Activated B cell treated with CpG ODN at 0.5 μM for 24 hours (primary cell): ENCODE measurements at regions of chr10 and their contacts with region 1.

Region 1: GRCh38 chr10:78302989-78303854 is 269.6 kb downstream of the RPS24 start:
- DNase-seq: peak; percentile 96
- ATAC-seq: peak; percentile 87
- H3K4me3 Mint-ChIP-seq: peak overlapping the region; percentile 92
- H3K27ac Mint-ChIP-seq: peak overlapping the region; percentile 93
- H3K4me1 Mint-ChIP-seq: peaks cover 47% of the 10 kb centered on the region
- H3K27me3 Mint-ChIP-seq: no peaks in the 10 kb centered on the region
- CTCF ChIP-seq: peak; percentile 44

Region 2: GRCh38 chr10:78047314-78047891 is 255.8 kb before region 1 on chr10:
- CTCF ChIA-PET with region 1: interaction called, 3 read pairs
- POLR2A ChIA-PET with region 1: interaction called, 3 read pairs
- intact Hi-C with region 1: loop called (anchors 5 kb)
- DNase-seq: peak; percentile 63
- ATAC-seq: peak; percentile 74
- H3K4me3 Mint-ChIP-seq: no peak overlapping the region
- H3K27ac Mint-ChIP-seq: no peak overlapping the region
- H3K4me1 Mint-ChIP-seq: peaks cover 22% of the 10 kb centered on the region
- H3K27me3 Mint-ChIP-seq: no peaks in the 10 kb centered on the region
- CTCF ChIP-seq: peak; percentile 45

Region 3: DNA sequence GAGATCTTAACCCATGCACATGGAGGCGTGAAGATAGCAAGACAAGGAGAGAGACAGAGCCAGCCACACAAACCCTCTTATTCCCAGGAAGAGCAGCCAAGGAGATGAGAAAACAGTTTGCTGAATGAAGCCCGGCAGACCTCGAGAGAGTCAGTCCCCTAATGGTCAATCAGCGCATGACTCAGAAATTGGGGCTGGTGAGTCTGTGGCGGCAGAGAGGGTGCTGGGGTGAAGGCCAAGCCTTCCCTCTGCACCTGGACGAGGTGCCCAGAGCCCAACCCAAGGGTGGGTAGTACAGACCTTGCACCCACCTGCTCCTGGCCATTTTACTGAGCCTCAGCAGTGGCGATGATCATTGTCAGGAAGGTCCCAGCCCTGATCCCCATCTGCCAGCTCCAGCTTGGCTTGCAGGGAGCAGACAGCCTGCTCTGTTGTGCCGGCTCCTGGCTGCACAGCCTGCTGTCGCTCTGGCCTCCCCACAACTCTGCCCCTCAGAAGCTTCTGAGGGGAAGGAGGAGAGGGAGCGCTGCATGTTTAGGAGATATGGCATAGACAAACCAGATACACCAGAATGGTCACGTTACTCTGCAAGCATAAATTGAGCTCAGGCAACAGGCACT is 13.0 kb before region 1 on chr10:
- CTCF ChIA-PET with region 1: no interaction called
- POLR2A ChIA-PET with region 1: no interaction called
- intact Hi-C with region 1: no loop called
- DNase-seq: no peak
- ATAC-seq: no peak
- H3K4me3 Mint-ChIP-seq: no peak overlapping the region
- H3K27ac Mint-ChIP-seq: no peak overlapping the region
- H3K4me1 Mint-ChIP-seq: peaks cover 8% of the 10 kb centered on the region
- H3K27me3 Mint-ChIP-seq: no peaks in the 10 kb centered on the region
- CTCF ChIP-seq: no peak

Region 4: GRCh38 chr10:78972947-78973900 is 670.0 kb after region 1 on chr10:
- CTCF ChIA-PET with region 1: no interaction called
- POLR2A ChIA-PET with region 1: no interaction called
- intact Hi-C with region 1: loop called (anchors 5 kb)
- DNase-seq: peak; percentile 41
- ATAC-seq: peak; percentile 61
- H3K4me3 Mint-ChIP-seq: peak overlapping the region; percentile 73
- H3K27ac Mint-ChIP-seq: no peak overlapping the region
- H3K4me1 Mint-ChIP-seq: peaks cover 14% of the 10 kb centered on the region
- H3K27me3 Mint-ChIP-seq: peaks cover 52% of the 10 kb centered on the region
- CTCF ChIP-seq: no peak

Region 5: GRCh38 chr10:79001082-79001885 is 698.1 kb after region 1 on chr10:
- CTCF ChIA-PET with region 1: no interaction called
- POLR2A ChIA-PET with region 1: no interaction called
- intact Hi-C with region 1: no loop called
- DNase-seq: no peak
- ATAC-seq: no peak
- H3K4me3 Mint-ChIP-seq: no peak overlapping the region
- H3K27ac Mint-ChIP-seq: no peak overlapping the region
- H3K4me1 Mint-ChIP-seq: peaks cover 5% of the 10 kb centered on the region
- H3K27me3 Mint-ChIP-seq: peaks cover 53% of the 10 kb centered on the region
- CTCF ChIP-seq: no peak

Region 6: GRCh38 chr10:79331709-79332108 is 1028.5 kb after region 1 on chr10:
- CTCF ChIA-PET with region 1: no interaction called
- POLR2A ChIA-PET with region 1: no interaction called
- intact Hi-C with region 1: loop called (anchors 5 kb)
- DNase-seq: peak; percentile 57
- ATAC-seq: peak; percentile 93
- H3K4me3 Mint-ChIP-seq: peak overlapping the region; percentile 41
- H3K27ac Mint-ChIP-seq: peak overlapping the region; percentile 79
- H3K4me1 Mint-ChIP-seq: peaks cover 24% of the 10 kb centered on the region
- H3K27me3 Mint-ChIP-seq: no peaks in the 10 kb centered on the region
- CTCF ChIP-seq: no peak